A549 (cell line): ENCODE measurements at regions of chr9 and their contacts with region 1.

Region 1: GRCh38 chr9:136118320-136119060 is at the start of gene TMEM250:
- DNase-seq: peak; percentile 87 to 98
- ATAC-seq: peak; percentile 76 to 87
- H3K4me3 ChIP-seq: peak within 1 kb of the TSS; percentile 93
- H3K27ac ChIP-seq: peak within 1 kb of the TSS; percentile 96 to 100
- H3K4me1 ChIP-seq: peaks cover 18% of the 10 kb centered on the region
- CTCF ChIP-seq: no peak
- EP300 ChIP-seq: no peak; a peak in 1 of 5 replicates
- POLR2A ChIP-seq: peak; percentile 84
- RAD21 ChIP-seq: no peak
- polyA plus RNA-seq, gene TMEM250: 13.0 and 15.3 TPM in 2 replicates

Region 2: DNA sequence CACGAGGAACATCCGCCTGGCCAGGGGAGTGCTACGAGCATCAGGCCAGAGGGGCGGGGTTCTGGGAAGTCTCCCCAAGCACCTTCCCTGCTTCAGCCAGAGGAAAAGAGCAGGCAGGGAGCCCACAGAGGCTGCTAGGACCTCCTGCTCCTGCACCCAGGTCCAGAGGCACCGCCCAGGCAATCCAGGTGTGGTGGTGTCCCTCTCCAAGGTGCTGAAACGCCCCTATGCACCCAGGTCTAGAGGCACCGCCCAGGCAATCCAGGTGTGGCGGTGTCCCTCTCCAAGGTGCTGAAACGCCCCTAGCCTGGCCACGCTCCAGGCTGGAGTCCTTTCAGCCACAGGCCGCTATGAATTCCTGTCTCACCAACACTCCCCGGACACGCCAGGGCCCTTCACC is 146.6 kb before region 1 on chr9:
- CTCF ChIA-PET with region 1: interaction called, 220 read pairs
- POLR2A ChIA-PET with region 1: interaction called, 5 read pairs
- DNase-seq: peak in 1 of 2 experiments; percentile 38
- ATAC-seq: peak; percentile 26 to 30; a peak in 4 of 6 replicates
- H3K4me3 ChIP-seq: no peak overlapping the region
- H3K27ac ChIP-seq: no peak overlapping the region
- H3K4me1 ChIP-seq: peaks cover 9% of the 10 kb centered on the region; the same call in 1 of the 3 replicates
- CTCF ChIP-seq: no peak
- EP300 ChIP-seq: no peak
- POLR2A ChIP-seq: no peak
- RAD21 ChIP-seq: no peak

Region 3: DNA sequence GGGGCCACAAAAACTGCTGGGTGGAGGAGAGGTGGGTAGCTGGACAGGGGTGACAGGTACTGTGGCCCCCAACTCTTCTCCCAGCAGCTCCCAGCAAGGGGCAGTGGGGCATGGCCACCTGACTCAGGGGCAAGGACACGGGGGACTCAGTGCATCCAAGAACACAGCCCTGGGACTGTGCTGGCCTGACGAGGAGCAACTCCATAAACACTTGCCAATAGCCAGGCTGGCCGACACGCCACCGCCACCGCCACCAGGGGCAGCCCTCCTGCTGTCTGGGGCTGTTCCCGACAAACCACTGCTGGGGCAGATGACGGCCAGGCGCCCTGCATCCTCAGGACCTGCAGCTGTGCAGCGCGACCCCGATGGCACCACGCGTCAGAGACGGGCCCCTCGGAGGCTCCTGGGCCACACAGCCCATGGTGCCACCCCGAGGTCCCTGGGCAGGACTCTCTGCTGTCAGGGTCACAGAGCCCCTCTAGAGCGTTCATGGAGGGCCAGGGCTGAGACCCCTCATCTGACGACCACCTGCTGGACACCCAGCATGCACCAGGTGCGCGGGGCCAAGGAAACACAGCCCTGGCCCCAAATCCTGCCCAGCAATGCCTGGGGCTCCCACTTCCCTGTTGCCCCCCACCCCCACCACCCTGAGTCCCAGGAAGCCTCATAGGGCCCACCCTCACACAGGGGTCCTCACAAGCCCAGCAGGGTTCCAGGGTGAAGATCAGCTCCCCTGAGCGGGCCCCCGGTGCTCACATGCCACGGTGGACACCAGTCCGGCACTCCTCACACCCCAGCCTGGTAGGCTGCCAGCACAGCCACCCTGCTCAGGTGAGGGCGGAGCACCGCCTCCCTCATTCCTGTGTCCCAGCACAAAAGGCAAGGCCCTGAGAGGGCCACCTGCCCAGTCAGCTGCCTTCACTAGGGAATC is 101.3 kb before region 1 on chr9:
- CTCF ChIA-PET with region 1: interaction called, 21 read pairs
- POLR2A ChIA-PET with region 1: no interaction called
- DNase-seq: no peak
- ATAC-seq: peak in 1 of 2 experiments; percentile 31; a peak in 3 of 6 replicates
- H3K4me3 ChIP-seq: no peak overlapping the region
- H3K27ac ChIP-seq: no peak overlapping the region
- H3K4me1 ChIP-seq: peaks cover 11% of the 10 kb centered on the region
- CTCF ChIP-seq: no peak
- EP300 ChIP-seq: no peak
- POLR2A ChIP-seq: no peak
- RAD21 ChIP-seq: no peak

Region 4: DNA sequence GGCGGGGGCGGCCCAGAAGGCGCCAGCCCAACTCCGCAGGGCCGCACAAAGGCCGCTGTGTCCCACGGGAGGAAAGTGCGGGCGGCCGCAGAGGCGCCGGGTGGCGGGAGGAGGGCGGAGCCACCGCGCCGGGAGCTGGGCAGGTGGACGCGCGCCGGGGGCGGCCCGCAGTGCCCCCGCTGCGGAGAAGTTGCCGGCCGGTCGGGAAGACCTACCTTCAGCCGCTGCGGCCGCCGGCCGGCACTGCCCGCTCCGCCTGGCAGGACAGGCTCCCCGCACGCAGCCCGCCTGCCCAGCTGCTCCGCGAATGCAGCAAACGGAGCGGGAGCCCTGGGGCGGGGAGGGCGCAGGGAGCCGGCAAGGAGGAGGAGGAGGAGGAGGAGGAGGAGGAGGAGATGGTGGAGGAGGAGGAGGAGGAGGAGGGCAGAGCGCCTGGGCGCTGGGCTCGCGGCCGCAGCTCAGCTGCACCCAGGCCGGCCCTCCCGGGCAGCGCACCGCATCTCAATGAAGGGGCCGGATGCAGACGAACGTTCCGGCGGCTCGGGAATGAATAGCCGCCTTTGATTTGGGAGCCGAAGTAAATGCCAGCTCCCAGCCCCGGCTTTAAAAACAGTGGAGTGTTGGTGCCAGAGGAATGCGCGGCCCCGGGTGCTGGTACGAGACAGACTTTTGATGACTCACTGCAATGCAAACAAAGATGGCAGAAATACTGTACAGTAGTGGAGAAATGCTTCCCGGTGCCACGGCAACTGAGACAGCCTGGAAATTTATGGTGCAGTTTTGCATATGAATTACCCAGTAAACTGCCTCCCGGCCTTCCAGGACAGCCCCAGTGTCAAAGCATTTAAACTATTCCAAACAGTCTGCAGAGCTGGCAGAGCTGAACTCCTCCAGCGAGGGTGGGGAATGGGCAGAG is 66.7 kb before region 1 on chr9:
- CTCF ChIA-PET with region 1: interaction called, 24 read pairs
- POLR2A ChIA-PET with region 1: interaction called, 9 read pairs
- DNase-seq: peak; percentile 90 to 98
- ATAC-seq: peak; percentile 70 to 84
- H3K4me3 ChIP-seq: peak overlapping the region; percentile 84
- H3K27ac ChIP-seq: peak overlapping the region; percentile 99
- H3K4me1 ChIP-seq: peaks cover 73% of the 10 kb centered on the region
- CTCF ChIP-seq: no peak
- EP300 ChIP-seq: peak; percentile 31 to 51; a peak in 2 of 5 replicates
- POLR2A ChIP-seq: peak; percentile 20; the same call in 1 of the 2 replicates
- RAD21 ChIP-seq: peak in 1 of 2 experiments; percentile 11; a peak in 2 of 5 replicates

Region 5: DNA sequence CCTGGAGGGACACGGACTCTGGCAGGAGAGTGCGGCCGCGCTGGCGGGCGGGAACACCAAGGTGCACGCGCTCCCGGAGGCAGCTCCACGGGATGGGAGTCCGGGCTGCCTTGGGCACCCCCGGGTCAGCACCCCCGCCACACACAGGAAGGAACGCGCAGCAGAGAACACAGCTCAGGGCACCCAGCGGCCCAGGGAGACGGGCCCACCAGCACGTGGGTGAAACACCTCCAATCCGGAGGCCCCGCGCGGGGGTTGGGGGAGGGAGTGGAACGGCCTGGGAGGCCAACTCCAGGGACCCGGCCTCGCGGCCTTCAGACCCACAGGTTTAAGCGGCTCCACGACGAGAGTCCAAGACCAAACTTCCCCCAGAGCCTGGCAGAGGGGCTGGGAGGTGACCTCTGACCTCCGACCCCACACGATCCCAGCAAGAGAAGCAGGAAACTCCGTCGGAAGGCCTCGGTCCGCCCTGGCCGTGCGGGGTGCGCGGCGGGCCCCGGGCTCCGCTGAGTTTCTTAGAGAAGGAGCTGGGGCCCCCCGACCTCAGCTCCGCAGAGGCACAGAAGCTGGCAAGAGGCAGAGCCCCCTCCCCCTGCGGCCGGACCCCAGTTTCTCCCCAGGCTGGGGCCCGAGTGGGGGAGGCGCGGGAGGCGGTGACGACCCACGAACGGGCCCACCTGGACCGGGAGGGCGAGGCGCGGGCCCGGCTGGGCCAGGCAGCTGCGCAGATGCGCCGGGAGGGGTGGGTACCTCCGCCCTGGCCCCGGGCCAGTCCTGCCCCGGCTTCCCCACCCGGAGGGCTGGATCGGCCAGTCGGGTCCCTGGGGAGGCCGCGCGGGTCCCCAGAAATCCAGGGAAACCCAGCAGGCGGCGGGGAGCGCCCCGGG is 24.3 kb before region 1 on chr9:
- CTCF ChIA-PET with region 1: interaction called, 94 read pairs
- POLR2A ChIA-PET with region 1: interaction called, 9 read pairs
- DNase-seq: peak; percentile 81 to 90
- ATAC-seq: peak; percentile 61 to 81
- H3K4me3 ChIP-seq: peak overlapping the region; percentile 79
- H3K27ac ChIP-seq: peak overlapping the region; percentile 92 to 94
- H3K4me1 ChIP-seq: peaks cover 54% of the 10 kb centered on the region
- CTCF ChIP-seq: no peak
- EP300 ChIP-seq: no peak
- POLR2A ChIP-seq: no peak
- RAD21 ChIP-seq: no peak

Region 6: GRCh38 chr9:136138566-136138965 is 20.1 kb after region 1 on chr9:
- CTCF ChIA-PET with region 1: interaction called, 22 read pairs
- POLR2A ChIA-PET with region 1: no interaction called
- DNase-seq: peak in 1 of 2 experiments; percentile 69
- ATAC-seq: peak in 1 of 2 experiments; percentile 22; a peak in 2 of 6 replicates
- H3K4me3 ChIP-seq: no peak overlapping the region
- H3K27ac ChIP-seq: no peak overlapping the region
- H3K4me1 ChIP-seq: peaks cover 4% of the 10 kb centered on the region; the same call in 2 of the 3 replicates
- CTCF ChIP-seq: peak; percentile 29; the same call in 1 of the 3 replicates
- EP300 ChIP-seq: no peak
- POLR2A ChIP-seq: no peak
- RAD21 ChIP-seq: peak in 1 of 2 experiments; percentile 44; a peak in 1 of 5 replicates

Region 7: DNA sequence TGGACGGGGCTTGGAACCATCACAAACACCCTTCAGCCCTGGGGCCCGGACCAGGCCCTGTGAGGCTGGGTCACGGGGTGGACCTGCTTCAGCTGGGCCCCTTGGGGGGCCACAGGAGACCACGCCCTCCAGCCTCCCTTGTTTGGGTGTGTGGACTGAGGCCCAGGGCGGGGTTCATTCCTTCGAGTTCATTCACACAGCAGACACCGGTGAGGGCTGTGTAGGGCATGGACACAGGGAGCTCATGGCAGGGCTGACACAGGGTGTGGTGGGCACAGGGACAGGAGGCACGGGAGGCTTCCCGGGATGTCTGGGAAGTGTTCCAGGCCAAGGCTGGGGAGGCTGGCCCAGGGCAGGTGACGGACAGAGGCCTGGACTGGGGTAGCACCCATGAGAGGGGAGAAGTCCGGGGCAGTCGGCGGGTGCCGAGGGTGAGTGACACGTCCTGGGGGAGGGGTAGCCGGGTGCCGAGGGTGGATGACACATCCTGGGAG is 236.1 kb after region 1 on chr9:
- CTCF ChIA-PET with region 1: no interaction called
- POLR2A ChIA-PET with region 1: no interaction called
- DNase-seq: peak; percentile 23 to 52
- ATAC-seq: peak; percentile 12 to 51; a peak in 5 of 6 replicates
- H3K4me3 ChIP-seq: no peak overlapping the region
- H3K27ac ChIP-seq: peak overlapping the region in 1 of 2 experiments; percentile 66; a peak in 3 of 6 replicates
- H3K4me1 ChIP-seq: peaks cover 27% of the 10 kb centered on the region
- CTCF ChIP-seq: no peak
- EP300 ChIP-seq: no peak
- POLR2A ChIP-seq: no peak
- RAD21 ChIP-seq: no peak